Prostate gland (tissue), 2 donors: ENCODE measurements at regions of chr5 and their contacts with region 1.

Region 1: DNA sequence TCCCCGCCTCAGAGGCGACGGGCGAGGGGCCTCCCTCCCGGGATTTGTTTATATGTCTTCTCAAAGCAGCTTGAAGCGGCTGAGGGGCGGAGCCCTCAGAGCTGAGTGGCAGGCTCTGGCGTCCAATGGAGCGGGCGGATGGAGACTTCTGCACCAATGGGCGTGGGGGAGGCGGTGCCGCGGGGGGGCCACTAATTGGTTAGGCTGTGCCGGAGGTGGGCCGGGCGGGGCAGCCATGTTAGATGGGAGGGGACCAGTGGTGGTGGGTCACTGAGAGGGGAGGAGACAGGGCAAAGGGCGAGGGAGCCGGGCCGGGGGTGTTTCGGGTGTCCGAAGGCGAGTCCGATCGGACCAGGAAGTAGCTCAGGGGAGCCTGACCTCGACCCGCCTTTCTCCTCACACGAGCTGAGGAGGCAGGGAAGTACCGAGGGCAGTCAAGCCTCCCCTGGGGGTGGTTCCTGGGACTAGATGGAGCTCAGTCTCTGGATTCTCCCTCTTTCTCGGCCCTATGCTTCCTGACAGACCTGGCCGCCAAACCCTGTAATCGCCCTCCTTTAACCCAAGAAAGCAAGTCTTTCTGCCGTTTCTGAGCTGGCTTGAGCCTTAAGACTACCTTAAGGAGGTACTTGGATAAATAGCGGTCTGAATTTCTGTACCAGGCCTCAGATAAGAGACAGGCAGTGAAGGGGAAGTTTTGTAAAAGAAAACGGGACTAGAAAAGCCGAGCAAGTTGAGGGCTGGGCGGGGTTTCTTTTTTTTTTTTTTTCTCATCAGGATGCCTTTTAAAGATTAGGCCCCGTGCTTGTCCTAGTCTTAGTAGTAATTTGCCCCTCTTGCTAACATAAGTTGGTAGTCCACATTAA is 1.1 kb downstream of the CREBRF start:
- DNase-seq: peak; percentile 99
- H3K4me3 ChIP-seq: peak overlapping the region; percentile 81 to 97
- H3K27ac ChIP-seq: peak overlapping the region; percentile 98 to 100
- H3K4me1 ChIP-seq: no peaks in the 10 kb centered on the region
- H3K27me3 ChIP-seq: no peaks in the 10 kb centered on the region
- CTCF ChIP-seq: peak in 2 of 4 experiments; percentile 34 to 36
- POLR2A ChIP-seq: no peak

Region 2: DNA sequence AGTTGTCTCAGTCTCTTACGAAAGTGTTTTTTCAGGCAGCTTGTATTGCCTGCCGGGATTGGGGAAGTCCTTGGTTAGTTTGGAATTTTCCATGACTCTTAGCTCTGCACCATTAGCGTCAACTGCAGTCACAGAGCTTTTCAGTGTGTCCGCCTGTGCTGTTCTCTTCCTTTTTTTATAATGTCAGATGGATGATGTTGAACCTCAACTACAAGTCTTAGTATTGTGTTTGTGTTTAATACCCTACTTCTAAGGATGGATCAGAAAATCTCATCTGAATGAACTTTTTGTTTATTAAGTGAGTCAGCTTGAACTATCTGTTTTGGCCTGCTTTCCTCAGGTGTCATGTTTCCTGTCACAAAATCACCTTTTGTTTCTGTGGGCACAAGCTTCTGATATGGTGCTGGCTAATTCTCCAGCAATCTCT is 40.7 kb before region 1 on chr5:
- intact Hi-C with region 1: loop called (anchors 5 kb)
- DNase-seq: peak; percentile 30
- H3K4me3 ChIP-seq: no peak overlapping the region
- H3K27ac ChIP-seq: peak overlapping the region; percentile 60 to 81
- H3K4me1 ChIP-seq: peaks cover 21% of the 10 kb centered on the region
- H3K27me3 ChIP-seq: no peaks in the 10 kb centered on the region
- CTCF ChIP-seq: no peak
- POLR2A ChIP-seq: no peak